Activated CD8-positive, alpha-beta memory T cell treated with anti-CD3 and anti-CD28 coated beads, Interleukin-2, amount 10 ng/mL, durations not matched to agents 7 days and 5 days (primary cell): ENCODE measurements at regions of chr12 and their contacts with region 1.

Region 1: GRCh38 chr12:63802012-63802608 is 22.4 kb downstream of the RXYLT1 start:
- DNase-seq: no peak
- ATAC-seq: no peak
- H3K4me3 Mint-ChIP-seq: no peak overlapping the region
- H3K27ac Mint-ChIP-seq: no peak overlapping the region
- H3K4me1 Mint-ChIP-seq: no peaks in the 10 kb centered on the region
- H3K27me3 Mint-ChIP-seq: no peaks in the 10 kb centered on the region

Region 2: GRCh38 chr12:63814146-63814772 is 12.1 kb after region 1 on chr12:
- CTCF ChIA-PET with region 1: interaction called, 26 read pairs
- DNase-seq: no peak
- ATAC-seq: peak; percentile 46
- H3K4me3 Mint-ChIP-seq: peak overlapping the region; percentile 45
- H3K27ac Mint-ChIP-seq: peak overlapping the region; percentile 82
- H3K4me1 Mint-ChIP-seq: peaks cover 35% of the 10 kb centered on the region
- H3K27me3 Mint-ChIP-seq: no peaks in the 10 kb centered on the region

Region 3: GRCh38 chr12:63836936-63837335 is 34.8 kb after region 1 on chr12:
- CTCF ChIA-PET with region 1: no interaction called
- DNase-seq: no peak
- ATAC-seq: no peak
- H3K4me3 Mint-ChIP-seq: no peak overlapping the region
- H3K27ac Mint-ChIP-seq: no peak overlapping the region
- H3K4me1 Mint-ChIP-seq: no peaks in the 10 kb centered on the region
- H3K27me3 Mint-ChIP-seq: peaks cover 11% of the 10 kb centered on the region